Right ventricle myocardium inferior (tissue), 1 donor: ENCODE measurements at regions of chr20 and their contacts with region 1.

Region 1: GRCh38 chr20:9416421-9416820 is 98.0 kb upstream of the LAMP5 start:
- DNase-seq: no peak
- ATAC-seq: no peak

Region 2: GRCh38 chr20:8983478-8984345 is 432.7 kb before region 1 on chr20:
- intact Hi-C with region 1: no loop called
- DNase-seq: no peak
- ATAC-seq: no peak

Region 3: DNA sequence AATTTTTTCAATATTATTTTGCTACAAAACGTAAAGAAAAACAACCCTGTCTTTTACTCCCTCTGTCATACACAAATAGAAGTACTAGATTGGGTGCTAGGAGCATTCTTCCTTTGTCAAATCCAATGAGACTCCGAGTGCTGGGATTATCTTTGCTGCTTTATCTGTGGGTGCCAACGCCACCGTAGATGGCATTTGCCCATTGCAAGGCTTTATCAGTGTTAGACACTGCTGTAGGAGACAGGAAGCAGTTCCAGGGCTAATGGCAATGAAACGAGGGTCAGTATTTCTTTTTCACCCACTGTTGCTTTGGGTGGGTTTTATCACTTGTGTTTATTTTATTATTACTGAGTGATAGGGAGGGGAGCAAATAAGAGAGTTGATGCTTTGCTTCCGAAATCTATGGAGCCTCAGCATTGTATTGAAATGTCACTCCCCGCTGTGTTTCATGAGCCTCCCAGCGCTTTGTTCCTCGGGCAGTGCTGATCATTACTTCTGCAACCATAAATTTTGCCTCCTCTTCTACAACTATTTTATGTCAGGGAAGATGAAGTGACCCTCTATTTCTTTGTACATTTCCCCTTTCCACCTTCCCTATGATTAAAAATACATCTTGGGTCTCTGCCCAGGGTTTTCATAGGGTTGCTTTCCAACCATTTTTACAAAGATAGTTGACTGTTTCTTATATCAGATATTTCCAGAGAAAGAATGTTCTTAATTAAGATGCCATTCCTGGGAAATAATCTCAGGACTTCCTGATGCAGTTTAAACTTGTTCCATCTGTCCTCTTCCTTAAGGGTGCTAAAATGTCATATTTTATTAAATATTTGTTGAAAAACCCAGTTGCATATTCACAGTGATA is 11.2 kb after region 1 on chr20:
- intact Hi-C with region 1: loop called (anchors 1 kb)
- DNase-seq: no peak
- ATAC-seq: no peak